HCT116 (cell line): ENCODE measurements at regions of chr9 and their contacts with region 1.

Region 1: GRCh38 chr9:136225748-136226679 is 19.6 kb downstream of the QSOX2 start:
- DNase-seq: peak; percentile 46
- ATAC-seq: peak; percentile 85
- H3K4me3 ChIP-seq: no peak overlapping the region
- H3K27ac ChIP-seq: no peak overlapping the region
- H3K4me1 ChIP-seq: peaks cover 19 to 54% of the 10 kb centered on the region in 2 experiments
- H3K27me3 ChIP-seq: no peaks in the 10 kb centered on the region
- CTCF ChIP-seq: peak; percentile 69 to 96 (median 89); a peak in 5 of 6 replicates
- POLR2A ChIP-seq: no peak
- RAD21 ChIP-seq: peak; percentile 58

Region 2: DNA sequence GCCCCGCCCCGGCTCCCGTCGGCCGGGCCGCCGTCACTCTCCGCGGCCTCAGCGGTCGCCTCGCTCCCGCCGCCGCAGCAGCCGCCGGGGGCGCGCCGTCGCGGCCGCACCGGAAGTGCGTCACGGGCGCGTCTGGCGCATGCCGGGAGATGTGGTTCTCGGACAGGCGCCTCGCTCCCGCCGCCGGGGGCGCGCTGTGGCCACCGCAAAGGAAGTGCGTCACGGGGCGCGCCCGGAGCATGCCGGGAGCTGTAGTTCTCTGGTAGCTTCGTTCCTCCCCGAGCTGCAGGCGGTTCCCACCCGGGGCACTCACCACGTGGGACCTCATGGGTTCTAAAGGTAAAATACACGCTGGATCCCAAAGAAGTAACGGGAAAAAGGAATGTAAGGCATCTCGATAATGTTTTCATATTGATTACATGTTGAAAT is 264.7 kb before region 1 on chr9 and contains the start of gene UBAC1:
- CTCF ChIA-PET with region 1: no interaction called
- POLR2A ChIA-PET with region 1: no interaction called
- RAD21 ChIA-PET with region 1: no interaction called
- intact Hi-C with region 1: loop called (anchors 10 kb)
- DNase-seq: peak; percentile 90
- ATAC-seq: peak; percentile 95
- H3K4me3 ChIP-seq: peak within 1 kb of the TSS; percentile 91 to 98
- H3K27ac ChIP-seq: peak within 1 kb of the TSS; percentile 73
- H3K4me1 ChIP-seq: peaks cover 15 to 22% of the 10 kb centered on the region in 2 experiments
- H3K27me3 ChIP-seq: no peaks in the 10 kb centered on the region
- CTCF ChIP-seq: peak in 1 of 3 experiments; percentile 23; a peak in 3 of 6 replicates
- POLR2A ChIP-seq: no peak
- RAD21 ChIP-seq: no peak
- total RNA-seq, gene UBAC1: 54.8 TPM

Region 3: DNA sequence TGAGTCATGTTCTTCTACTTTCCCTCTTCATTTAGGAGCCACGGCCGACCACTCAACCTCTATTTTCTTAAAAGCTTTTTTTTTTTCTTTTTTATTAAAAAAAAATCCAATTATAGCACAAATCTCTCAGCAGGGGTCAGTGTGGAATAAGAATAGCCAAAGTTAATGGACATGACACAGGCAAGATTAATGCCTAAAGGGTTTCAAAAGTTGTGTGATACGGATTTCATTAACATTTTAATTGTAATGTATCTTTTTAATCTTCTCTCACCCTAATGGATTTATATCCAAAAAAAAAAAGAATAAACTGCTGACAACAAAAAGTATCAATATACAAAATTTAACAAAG is 136.3 kb before region 1 on chr9:
- CTCF ChIA-PET with region 1: no interaction called
- POLR2A ChIA-PET with region 1: no interaction called
- RAD21 ChIA-PET with region 1: no interaction called
- intact Hi-C with region 1: loop called (anchors 5 kb)
- DNase-seq: no peak
- ATAC-seq: no peak
- H3K4me3 ChIP-seq: no peak overlapping the region
- H3K27ac ChIP-seq: no peak overlapping the region
- H3K4me1 ChIP-seq: peaks cover 29 to 42% of the 10 kb centered on the region in 2 experiments
- H3K27me3 ChIP-seq: no peaks in the 10 kb centered on the region
- CTCF ChIP-seq: peak in 2 of 3 experiments; percentile 22 to 50; a peak in 3 of 6 replicates
- POLR2A ChIP-seq: no peak
- RAD21 ChIP-seq: no peak

Region 4: GRCh38 chr9:136170006-136170901 is 55.8 kb before region 1 on chr9:
- CTCF ChIA-PET with region 1: interaction called, 3 read pairs
- POLR2A ChIA-PET with region 1: no interaction called
- RAD21 ChIA-PET with region 1: no interaction called
- intact Hi-C with region 1: loop called (anchors 2 kb)
- DNase-seq: no peak
- ATAC-seq: peak; percentile 95
- H3K4me3 ChIP-seq: no peak overlapping the region
- H3K27ac ChIP-seq: no peak overlapping the region
- H3K4me1 ChIP-seq: peaks cover 0 to 8% of the 10 kb centered on the region in 2 experiments; a peak in 1 of 4 replicates
- H3K27me3 ChIP-seq: no peaks in the 10 kb centered on the region
- CTCF ChIP-seq: peak; percentile 78 to 94 (median 94); a peak in 5 of 6 replicates
- POLR2A ChIP-seq: no peak
- RAD21 ChIP-seq: peak; percentile 88